ENCODE measurements at regions of chr3 and their contacts with region 1.

Region 1: DNA sequence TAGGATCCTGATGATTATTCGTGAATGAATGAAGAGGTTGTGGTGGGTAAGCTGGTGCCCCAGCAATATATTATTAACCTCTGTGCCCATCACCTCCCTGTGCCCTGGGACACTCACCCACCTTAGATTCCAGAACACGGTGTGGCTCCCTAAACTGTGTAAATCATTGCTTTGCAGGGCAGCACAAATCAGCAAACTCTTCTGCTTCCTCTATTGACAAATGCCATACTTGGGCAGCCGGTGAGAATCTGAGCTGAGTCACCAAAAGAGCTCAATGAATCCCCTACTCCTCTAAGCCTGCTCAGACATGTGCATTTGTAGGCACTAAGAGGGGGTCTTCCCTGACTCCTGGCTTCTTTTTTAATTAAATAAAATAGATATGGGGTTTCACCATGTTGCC is 15.7 kb downstream of the UQCC5 start:
- DNase-seq: no peak
- ATAC-seq: peak in 1 of 4 donors; percentile 39
- H3K4me3 ChIP-seq: no peak overlapping the region
- H3K27ac ChIP-seq: peak overlapping the region in 1 of 12 donors; percentile 35
- H3K4me1 ChIP-seq: peaks cover 0 to 40% (median 2%) of the 10 kb centered on the region in 12 donors
- H3K27me3 ChIP-seq: no peaks in the 10 kb centered on the region
- CTCF ChIP-seq: no peak
- POLR2A ChIP-seq: no peak

Region 2: DNA sequence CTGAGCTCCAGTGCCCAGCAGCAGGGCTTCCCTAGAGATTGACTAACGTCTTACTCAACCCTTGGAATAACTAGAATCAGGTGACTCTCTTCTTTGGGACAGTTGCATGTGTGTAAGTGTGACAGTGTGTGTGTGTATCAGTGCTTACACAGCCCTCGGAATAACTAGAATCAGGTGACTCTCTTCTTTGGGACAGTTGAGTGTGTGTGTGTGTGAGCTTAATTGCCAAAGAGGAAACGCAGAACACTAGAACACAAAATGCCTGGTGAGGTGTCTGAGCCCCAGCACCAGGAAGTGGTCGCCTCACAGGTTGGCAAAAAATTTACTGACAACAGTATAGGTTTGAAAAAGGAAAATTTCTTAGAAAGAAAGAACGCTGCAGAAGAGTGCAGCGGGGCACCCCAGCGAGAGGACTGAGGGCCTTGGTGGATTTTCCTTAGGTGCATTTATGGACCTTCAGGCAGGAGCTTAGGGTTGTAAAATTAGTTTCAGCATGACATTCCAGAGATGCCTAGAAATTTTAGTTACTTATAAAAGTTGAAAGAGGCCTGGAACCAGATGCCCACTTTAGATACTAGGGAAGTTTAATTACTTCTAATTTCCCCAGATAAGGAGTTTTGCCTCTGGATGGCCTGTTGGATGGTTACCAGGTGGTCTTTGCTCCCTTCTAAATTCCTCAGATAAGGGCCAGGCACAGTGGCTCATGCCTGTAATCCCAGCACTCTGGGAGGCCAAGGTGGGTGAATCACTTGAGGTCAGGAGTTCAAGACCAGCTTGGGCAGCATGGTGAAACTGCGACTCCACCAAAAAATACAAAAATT is 269.9 kb before region 1 on chr3:
- intact Hi-C with region 1: no loop called
- DNase-seq: no peak
- ATAC-seq: no peak
- H3K4me3 ChIP-seq: no peak overlapping the region
- H3K27ac ChIP-seq: peak overlapping the region in 2 of 12 donors; percentile 20 to 80
- H3K4me1 ChIP-seq: peaks cover 0 to 54% (median 23%) of the 10 kb centered on the region in 12 donors
- H3K27me3 ChIP-seq: no peaks in the 10 kb centered on the region
- CTCF ChIP-seq: no peak
- POLR2A ChIP-seq: no peak

Region 3: DNA sequence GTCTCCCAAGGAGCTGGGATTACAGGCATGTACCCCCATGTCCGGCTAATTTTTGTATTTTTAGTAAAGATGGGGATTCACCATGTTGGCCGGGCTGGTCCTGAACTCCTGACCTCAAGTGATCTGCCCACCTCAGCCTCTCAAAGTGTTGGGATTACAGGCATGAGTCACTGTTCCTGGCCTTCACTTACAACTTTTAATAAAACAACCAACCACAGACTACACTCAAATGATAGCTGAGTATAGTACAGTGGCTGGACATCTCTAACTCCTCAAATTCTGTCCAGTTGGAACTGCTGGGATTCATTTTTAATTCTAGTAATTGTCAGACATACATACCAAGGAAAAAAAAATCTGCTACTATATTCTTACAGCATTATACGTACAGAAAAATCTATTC is 62.6 kb after region 1 on chr3:
- intact Hi-C with region 1: no loop called
- DNase-seq: no peak
- ATAC-seq: no peak
- H3K4me3 ChIP-seq: no peak overlapping the region
- H3K27ac ChIP-seq: no peak overlapping the region
- H3K4me1 ChIP-seq: no peaks in the 10 kb centered on the region
- H3K27me3 ChIP-seq: no peaks in the 10 kb centered on the region
- CTCF ChIP-seq: no peak
- POLR2A ChIP-seq: no peak

Region 4: DNA sequence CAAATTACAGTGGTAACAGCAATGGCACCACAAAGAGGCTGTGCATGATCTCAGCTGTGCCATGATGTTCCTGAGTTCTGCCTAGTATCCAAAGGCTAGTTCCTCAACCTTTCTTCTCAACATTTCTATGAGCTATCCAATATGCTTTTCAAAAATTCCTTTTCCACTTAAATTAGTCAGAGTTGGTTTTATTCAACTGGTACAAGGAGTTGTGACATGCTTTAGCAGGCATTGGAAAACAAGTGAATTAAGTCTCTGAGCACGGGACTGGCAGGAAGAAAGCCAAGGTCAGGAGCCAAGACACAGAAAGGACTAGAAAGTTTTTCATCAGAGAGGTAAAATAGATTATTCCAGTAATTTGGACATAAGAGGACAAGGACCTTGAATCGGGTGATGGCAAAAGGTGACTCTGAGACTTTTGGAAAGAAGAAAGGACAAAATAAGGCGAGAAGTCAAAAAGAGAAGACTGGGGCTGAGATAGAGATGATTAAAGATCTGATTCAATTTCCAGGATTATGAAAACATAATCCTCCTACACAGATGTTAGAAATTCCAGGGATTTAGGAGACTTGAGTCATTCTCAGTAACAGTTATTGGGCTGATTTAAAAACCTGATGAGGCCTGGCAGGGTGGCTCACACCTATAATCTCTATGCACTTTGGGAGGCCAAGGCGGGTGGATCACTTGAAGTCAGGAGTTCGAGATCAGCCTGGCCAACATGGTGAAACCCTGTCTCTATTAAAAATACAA is 97.5 kb after region 1 on chr3:
- intact Hi-C with region 1: loop called in 1 of 10 experiments (anchors 10 kb)
- DNase-seq: no peak
- ATAC-seq: no peak
- H3K4me3 ChIP-seq: no peak overlapping the region
- H3K27ac ChIP-seq: no peak overlapping the region
- H3K4me1 ChIP-seq: no peaks in the 10 kb centered on the region
- H3K27me3 ChIP-seq: no peaks in the 10 kb centered on the region
- CTCF ChIP-seq: no peak
- POLR2A ChIP-seq: no peak

Measured in heart left ventricle (tissue), 16 donors.